ENCODE measurements at regions of chr6 and their contacts with region 1.

Region 1: DNA sequence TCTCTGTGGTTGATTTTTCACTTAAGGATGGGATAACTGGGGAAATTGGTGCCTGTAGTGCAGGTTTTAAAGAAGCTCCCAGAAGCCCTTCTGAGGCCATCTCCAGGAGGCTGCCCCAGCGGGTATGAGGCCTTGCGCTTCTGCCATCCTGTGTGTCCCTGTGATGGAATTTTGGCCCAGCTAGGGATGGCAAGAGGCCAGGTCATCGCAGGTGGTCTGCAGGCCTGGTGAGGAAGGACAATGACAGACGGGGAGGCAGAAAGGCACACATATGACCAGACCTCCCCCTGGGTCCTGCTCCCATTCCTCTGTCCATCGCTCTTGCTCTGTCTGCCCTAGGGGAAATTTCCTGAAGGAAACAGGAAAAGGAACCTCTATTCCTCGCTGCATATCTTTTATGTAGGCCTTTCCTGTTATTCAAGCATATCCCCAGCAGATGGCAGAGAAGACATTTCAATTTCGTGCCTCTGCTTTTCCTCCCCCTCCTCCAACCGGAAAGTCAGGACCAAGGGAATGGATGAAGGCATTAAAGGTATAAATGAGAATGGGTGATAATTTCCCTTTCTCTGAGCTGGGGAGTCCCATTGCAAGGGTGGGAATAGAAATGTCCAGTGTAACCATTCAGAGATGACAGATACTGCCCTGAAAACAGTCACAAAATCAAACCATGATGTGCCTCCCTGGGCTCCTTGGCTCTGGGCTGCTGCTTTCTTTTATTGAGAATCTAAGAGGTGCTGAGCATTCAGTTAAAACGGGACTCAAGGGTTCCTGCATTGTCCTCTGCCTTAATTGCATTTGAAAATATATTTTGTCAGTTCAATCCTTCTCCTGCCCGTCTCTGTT is 17.6 kb upstream of the HLA-F start:
- DNase-seq: peak; percentile 32
- H3K4me3 ChIP-seq: no peak overlapping the region
- H3K27ac ChIP-seq: no peak overlapping the region
- H3K4me1 ChIP-seq: no peaks in the 10 kb centered on the region
- H3K27me3 ChIP-seq: no peaks in the 10 kb centered on the region
- CTCF ChIP-seq: peak; percentile 41 to 53

Region 2: DNA sequence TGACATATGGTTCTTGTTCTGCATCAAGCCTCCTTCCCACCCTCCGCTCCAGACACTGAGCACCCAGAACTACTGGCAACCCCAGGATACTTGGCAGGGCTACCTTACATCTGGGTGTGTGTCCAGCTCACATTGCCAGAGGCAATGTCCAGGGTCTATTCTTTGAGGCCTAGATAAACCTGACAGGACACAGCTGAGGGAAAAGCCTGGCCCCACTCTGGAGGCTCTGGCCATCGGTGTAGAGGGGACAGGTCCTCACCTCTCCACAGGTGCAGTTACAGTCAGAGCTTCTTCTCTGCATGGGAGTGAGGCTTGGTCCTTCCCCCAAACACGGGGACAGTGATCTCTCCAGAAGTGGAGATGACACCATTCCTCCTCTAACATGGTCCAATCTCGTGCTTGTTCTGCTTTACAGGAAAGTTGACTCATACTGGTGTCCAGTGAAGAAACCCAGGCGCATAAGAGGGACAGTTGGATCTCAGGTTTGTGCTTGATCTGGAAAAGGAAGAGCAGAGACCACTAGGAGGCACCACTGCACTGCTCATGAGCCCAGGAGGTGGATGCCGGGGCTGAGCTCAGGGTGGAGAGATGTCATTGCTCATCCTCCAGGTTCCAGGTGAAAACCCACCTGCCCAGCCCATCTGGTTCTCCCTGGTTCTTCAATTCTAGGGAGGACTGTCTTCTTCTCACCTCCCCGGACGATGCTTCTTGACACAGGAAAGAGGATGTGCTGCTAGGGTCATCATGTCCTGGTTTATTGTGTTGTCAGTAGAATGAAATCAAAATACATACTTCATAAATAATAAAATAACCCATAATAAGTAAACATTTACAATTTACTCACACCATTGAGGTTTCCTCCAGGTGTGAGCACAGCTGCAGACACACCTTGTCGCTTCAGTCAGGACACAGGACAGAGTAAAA is 32.4 kb after region 1 on chr6:
- CTCF ChIA-PET with region 1: no interaction called
- dilution Hi-C with region 1: no loop called
- in situ Hi-C with region 1: no loop called
- intact Hi-C with region 1: loop called (anchors 1 kb)
- DNase-seq: peak; percentile 74
- H3K4me3 ChIP-seq: no peak overlapping the region
- H3K27ac ChIP-seq: no peak overlapping the region
- H3K4me1 ChIP-seq: peaks cover 14% of the 10 kb centered on the region
- H3K27me3 ChIP-seq: no peaks in the 10 kb centered on the region
- CTCF ChIP-seq: peak; percentile 76 to 88

Measured in mammary epithelial cell (primary cell).